Esophagus muscularis mucosa (tissue), 4 donors: ENCODE measurements at regions of chr2 and their contacts with region 1.

Region 1: GRCh38 chr2:18514526-18515461 is 45.7 kb downstream of the RDH14 start:
- DNase-seq: no peak
- H3K4me3 ChIP-seq: no peak overlapping the region
- H3K27ac ChIP-seq: peak overlapping the region; percentile 77 to 86 (median 81)
- H3K4me1 ChIP-seq: peaks cover 17 to 56% (median 56%) of the 10 kb centered on the region in 4 donors
- H3K27me3 ChIP-seq: no peaks in the 10 kb centered on the region
- CTCF ChIP-seq: no peak
- EP300 ChIP-seq: no peak
- POLR2A ChIP-seq: no peak

Region 2: DNA sequence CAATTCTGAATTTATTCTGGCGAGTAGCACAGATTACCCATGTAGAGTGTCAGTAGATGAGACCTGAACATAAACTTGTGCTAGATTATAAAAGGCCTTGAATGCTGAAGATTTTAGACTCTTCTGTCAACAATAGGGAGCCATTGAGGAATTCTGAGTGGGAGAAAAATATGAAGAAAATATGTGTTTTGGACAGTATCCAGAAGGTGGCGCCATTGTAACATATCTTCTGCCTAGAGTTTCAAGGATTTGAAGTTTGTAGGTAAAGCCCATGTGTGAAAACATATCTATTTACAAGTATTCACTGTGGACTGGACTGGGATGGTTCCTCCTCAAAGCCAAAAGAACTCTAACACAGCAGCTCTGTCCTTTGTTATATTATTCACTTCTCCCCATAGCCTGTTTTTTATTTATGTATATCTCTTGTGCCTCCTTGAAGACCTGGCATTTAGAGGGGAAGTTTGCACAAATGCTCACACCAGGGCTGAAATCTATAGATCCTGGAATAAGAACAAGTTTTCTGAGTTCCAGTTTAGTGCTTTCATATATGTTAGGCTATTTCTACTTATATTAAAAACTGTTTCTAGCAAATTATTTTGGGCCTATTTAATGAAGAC is 79.3 kb before region 1 on chr2:
- intact Hi-C with region 1: loop called (anchors 2 kb)
- DNase-seq: no peak
- H3K4me3 ChIP-seq: no peak overlapping the region
- H3K27ac ChIP-seq: peak overlapping the region; percentile 11 to 47 (median 32)
- H3K4me1 ChIP-seq: peaks cover 0 to 55% (median 50%) of the 10 kb centered on the region in 4 donors
- H3K27me3 ChIP-seq: no peaks in the 10 kb centered on the region
- CTCF ChIP-seq: peak; percentile 57 to 63 (median 61)
- EP300 ChIP-seq: no peak
- POLR2A ChIP-seq: no peak

Region 3: DNA sequence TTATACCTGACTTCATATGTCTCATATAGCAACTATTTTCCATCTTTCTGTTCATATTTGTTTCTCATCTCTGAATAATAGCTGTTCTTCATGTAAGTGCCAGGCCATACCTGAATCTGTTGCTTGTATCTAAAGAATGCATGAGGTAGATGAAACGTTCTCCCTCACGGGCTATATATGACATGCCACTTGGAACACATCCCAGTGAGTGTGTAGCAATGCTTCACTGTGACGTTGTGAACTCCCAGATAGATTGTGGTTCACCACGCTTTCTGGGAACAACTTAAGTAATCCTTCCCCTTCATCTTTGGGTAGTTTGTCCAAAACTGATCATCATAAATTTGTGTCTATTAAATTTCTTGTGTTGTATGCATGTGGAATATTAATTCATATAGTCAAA is 14.5 kb before region 1 on chr2:
- intact Hi-C with region 1: no loop called
- DNase-seq: no peak
- H3K4me3 ChIP-seq: no peak overlapping the region
- H3K27ac ChIP-seq: no peak overlapping the region
- H3K4me1 ChIP-seq: peaks cover 0 to 11% (median 0%) of the 10 kb centered on the region in 4 donors
- H3K27me3 ChIP-seq: no peaks in the 10 kb centered on the region
- CTCF ChIP-seq: no peak
- EP300 ChIP-seq: no peak
- POLR2A ChIP-seq: no peak